ENCODE measurements at regions of chr17 and their contacts with region 1.

Region 1: DNA sequence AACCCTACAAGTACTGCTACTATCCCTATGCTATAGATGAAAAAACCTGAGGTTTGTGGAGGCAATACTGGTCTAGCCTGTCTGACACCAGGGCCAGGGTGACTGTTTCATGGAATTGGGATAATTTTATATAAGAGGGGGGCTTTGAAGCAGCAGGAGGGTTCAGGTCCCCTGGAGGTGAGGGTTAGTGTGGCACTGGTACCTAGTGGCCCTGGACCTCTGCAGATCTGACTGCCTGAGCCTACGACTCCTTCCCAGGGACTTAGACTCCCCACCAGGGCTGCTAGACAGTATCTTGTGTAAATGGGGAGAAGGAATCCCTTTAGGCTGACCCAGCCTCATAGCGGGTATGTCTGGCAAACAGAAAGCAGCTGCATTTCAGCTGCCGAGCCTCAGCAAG is 6.8 kb downstream of the ADAP2 start:
- DNase-seq: no peak
- H3K4me3 ChIP-seq: no peak overlapping the region
- H3K27ac ChIP-seq: no peak overlapping the region
- H3K4me1 ChIP-seq: no peaks in the 10 kb centered on the region
- H3K27me3 ChIP-seq: peaks cover 7% of the 10 kb centered on the region in 2 experiments
- CTCF ChIP-seq: no peak
- POLR2A ChIP-seq: no peak

Region 2: GRCh38 chr17:29918922-29919856 is 1009.4 kb before region 1 on chr17:
- CTCF ChIA-PET with region 1: no interaction called
- POLR2A ChIA-PET with region 1: interaction called, 11 read pairs
- dilution Hi-C with region 1: no loop called
- intact Hi-C with region 1: no loop called
- DNase-seq: peak; percentile 69
- H3K4me3 ChIP-seq: no peak overlapping the region
- H3K27ac ChIP-seq: peak overlapping the region; percentile 70
- H3K4me1 ChIP-seq: peaks cover 7% of the 10 kb centered on the region
- H3K27me3 ChIP-seq: no peaks in the 10 kb centered on the region
- CTCF ChIP-seq: no peak
- POLR2A ChIP-seq: no peak